Endothelial cell of umbilical vein (primary cell): ENCODE measurements at regions of chr18 and their contacts with region 1.

Region 1: DNA sequence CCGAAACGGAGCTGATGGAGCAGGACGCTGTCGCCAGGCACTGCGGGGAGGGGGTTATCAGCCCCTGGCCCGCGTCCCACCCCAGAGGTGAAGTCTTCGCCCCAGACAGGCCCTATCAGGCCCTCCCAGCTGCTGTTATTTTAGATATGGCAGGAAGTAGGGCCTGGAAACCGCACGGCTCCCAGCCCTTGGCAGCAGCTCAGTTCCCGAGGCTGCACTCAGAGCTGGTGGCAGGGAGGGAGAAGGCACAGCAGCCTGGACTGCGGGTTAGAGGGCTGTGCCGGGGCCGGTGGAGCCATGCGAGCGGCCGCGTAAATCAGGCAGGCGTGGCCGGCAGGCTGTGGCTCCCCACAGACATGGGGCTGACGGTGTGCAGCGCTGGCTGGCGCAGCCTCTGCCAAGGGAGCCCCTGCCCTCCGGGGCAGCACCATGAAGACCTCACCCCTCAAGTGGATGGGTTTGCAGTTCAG is 111.4 kb downstream of the NFATC1 start:
- DNase-seq: peak; percentile 96
- H3K4me3 ChIP-seq: no peak overlapping the region
- H3K27ac ChIP-seq: peak overlapping the region; percentile 88
- H3K4me1 ChIP-seq: peaks cover 31% of the 10 kb centered on the region
- H3K27me3 ChIP-seq: no peaks in the 10 kb centered on the region
- CTCF ChIP-seq: no peak
- POLR2A ChIP-seq: peak; percentile 66

Region 2: GRCh38 chr18:79458131-79458838 is 48.8 kb before region 1 on chr18:
- CTCF ChIA-PET with region 1: interaction called, 8 read pairs
- POLR2A ChIA-PET with region 1: interaction called, 3 read pairs
- dilution Hi-C with region 1: no loop called
- intact Hi-C with region 1: loop called (anchors 1 kb)
- DNase-seq: peak; percentile 93
- H3K4me3 ChIP-seq: no peak overlapping the region
- H3K27ac ChIP-seq: peak overlapping the region; percentile 98
- H3K4me1 ChIP-seq: peaks cover 40% of the 10 kb centered on the region
- H3K27me3 ChIP-seq: no peaks in the 10 kb centered on the region
- CTCF ChIP-seq: no peak
- POLR2A ChIP-seq: peak; percentile 66

Region 3: DNA sequence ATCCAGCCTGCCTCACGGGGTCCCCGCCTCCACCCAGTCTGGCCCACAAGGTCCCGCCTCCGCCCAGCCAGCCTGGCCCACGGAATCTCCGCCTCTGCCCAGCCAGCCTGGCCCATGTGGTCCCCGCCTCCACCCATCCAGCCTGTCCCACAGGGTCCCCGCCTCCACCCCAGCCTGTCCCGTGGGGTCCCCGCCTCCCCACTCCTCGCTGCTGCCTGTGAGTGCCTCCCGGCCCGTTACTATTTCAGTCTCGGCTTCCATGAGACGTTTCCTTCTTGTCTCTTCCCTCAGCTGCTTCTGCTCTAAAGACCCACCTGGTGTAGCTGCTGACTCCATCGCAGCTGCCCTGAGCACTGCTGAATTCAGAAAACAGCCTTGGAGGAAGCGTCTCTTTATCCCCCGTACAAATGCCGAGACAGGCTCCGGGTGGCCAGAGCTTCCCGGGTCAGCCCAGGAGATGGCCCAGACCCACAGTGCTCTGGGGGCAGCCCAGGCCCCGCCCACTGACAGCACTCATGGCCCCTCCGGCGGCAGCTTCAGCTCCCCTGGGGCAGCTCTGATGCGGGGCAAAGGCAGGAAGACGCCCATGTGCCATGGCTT is 41.6 kb before region 1 on chr18:
- CTCF ChIA-PET with region 1: no interaction called
- POLR2A ChIA-PET with region 1: interaction called, 3 read pairs
- dilution Hi-C with region 1: no loop called
- intact Hi-C with region 1: loop called (anchors 1 kb)
- DNase-seq: peak; percentile 28
- H3K4me3 ChIP-seq: no peak overlapping the region
- H3K27ac ChIP-seq: peak overlapping the region; percentile 5
- H3K4me1 ChIP-seq: peaks cover 7% of the 10 kb centered on the region
- H3K27me3 ChIP-seq: no peaks in the 10 kb centered on the region
- CTCF ChIP-seq: no peak
- POLR2A ChIP-seq: no peak